HCT116 (cell line): ENCODE measurements at regions of chrX and their contacts with region 1.

Region 1: GRCh38 chrX:50769389-50770063 is 44.5 kb downstream of the SHROOM4 start:
- DNase-seq: no peak
- ATAC-seq: no peak
- H3K4me3 ChIP-seq: no peak overlapping the region
- H3K27ac ChIP-seq: no peak overlapping the region
- H3K4me1 ChIP-seq: no peaks in the 10 kb centered on the region
- H3K27me3 ChIP-seq: no peaks in the 10 kb centered on the region
- CTCF ChIP-seq: no peak
- POLR2A ChIP-seq: no peak
- RAD21 ChIP-seq: no peak

Region 2: DNA sequence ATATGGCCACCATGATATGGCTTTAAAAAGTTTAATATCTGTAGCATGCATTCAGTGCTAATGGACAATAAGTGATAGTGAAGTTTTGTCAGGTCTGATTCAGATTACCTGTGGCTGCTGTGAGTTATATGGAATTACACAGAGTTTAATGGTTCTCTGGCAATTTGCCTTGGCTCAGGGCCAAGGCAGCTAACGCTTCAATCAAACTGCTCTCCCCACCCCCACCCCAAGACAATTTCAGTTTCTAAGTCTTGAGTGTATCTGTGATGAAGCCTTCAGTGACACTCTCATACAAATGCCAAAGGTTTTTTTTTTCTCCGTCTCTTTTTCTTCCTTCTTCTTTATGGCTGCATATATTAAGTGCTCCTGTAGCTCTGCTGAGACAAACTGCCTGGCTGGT is 62.1 kb before region 1 on chrX:
- CTCF ChIA-PET with region 1: no interaction called
- POLR2A ChIA-PET with region 1: no interaction called
- RAD21 ChIA-PET with region 1: no interaction called
- intact Hi-C with region 1: loop called (anchors 10 kb)
- DNase-seq: no peak
- ATAC-seq: no peak
- H3K4me3 ChIP-seq: no peak overlapping the region
- H3K27ac ChIP-seq: no peak overlapping the region
- H3K4me1 ChIP-seq: no peaks in the 10 kb centered on the region
- H3K27me3 ChIP-seq: peaks cover 13% of the 10 kb centered on the region; the same call in 1 of the 2 replicates
- CTCF ChIP-seq: no peak
- POLR2A ChIP-seq: no peak
- RAD21 ChIP-seq: no peak

Region 3: GRCh38 chrX:51047836-51048349 is 278.4 kb after region 1 on chrX:
- CTCF ChIA-PET with region 1: no interaction called
- POLR2A ChIA-PET with region 1: no interaction called
- RAD21 ChIA-PET with region 1: no interaction called
- intact Hi-C with region 1: no loop called
- DNase-seq: no peak
- ATAC-seq: no peak
- H3K4me3 ChIP-seq: no peak overlapping the region
- H3K27ac ChIP-seq: no peak overlapping the region
- H3K4me1 ChIP-seq: no peaks in the 10 kb centered on the region
- H3K27me3 ChIP-seq: 0 out of 2 replicates have a peak, but pooled peaks cover 2% of the 10 kb centered on the region
- CTCF ChIP-seq: no peak
- POLR2A ChIP-seq: no peak
- RAD21 ChIP-seq: peak; percentile 24; the same call in 1 of the 2 replicates